Ovary (tissue), 10 donors: ENCODE measurements at regions of chr3 and their contacts with region 1.

Region 1: DNA sequence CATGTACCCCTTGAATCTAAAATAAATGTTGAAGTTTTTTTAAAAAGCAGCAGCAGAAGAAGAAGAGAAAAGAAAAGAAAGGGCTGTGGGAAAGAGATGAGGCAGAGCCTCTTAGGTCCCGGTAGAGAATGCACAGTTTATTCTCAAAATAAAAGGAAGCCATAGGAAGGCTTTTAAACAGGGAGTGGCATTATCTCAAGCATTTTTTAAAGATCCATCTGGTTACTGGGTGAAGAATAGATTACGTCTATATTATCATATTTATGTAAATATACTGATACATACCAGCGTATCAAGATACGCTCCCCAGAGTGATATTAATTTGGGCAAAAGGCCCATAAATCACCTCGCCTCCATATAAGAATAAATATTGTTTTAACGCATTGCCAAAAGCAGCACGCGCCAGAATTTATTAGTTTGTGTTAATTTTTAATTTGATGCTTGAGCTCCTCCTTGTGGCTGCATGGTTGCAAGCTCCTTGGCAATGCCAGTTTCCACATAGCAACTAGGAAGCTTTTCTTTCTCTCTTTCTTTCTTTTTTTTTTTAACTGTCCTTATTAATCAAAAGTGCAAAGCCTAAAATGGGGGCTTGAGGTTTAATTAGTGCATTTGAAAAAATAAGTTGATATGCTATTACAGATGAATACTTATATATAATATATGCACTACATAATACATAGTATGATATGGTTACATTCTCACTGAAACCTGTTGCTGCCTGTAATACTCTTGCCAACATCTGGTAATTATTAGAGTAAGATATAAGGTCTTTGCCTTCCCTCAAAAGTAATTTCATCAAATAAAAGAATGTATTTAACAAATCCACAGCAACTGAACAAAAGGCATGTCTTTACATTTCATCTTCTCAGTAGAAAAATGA is 242.8 kb upstream of the UBE2E2 start:
- DNase-seq: peak; percentile 43 to 69 (median 61)
- H3K4me3 ChIP-seq: no peak overlapping the region
- H3K27ac ChIP-seq: no peak overlapping the region
- H3K4me1 ChIP-seq: no peaks in the 10 kb centered on the region
- H3K27me3 ChIP-seq: no peaks in the 10 kb centered on the region
- CTCF ChIP-seq: peak in 2 of 3 donors; percentile 61 to 62
- EP300 ChIP-seq: no peak
- POLR2A ChIP-seq: no peak

Region 2: DNA sequence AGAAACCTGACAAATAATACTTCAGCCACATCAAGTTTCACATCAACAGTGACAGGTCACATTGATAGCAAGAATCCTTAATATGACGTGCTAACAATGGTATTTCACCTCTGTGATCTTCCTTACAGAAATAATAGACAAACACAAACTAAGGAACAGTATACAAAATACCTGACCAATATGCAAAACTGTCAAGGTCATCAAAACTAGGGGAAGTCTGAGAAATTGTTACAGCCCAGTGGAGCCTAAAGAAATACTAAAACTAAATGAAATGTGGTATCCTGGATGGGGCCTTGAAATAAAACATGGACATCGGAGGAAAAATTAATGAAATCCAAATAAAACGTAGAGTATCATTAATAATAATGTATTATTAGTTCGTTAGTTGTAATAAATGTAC is 787.4 kb before region 1 on chr3:
- intact Hi-C with region 1: loop called in 1 of 4 experiments (anchors 5 kb)
- DNase-seq: no peak
- H3K4me3 ChIP-seq: no peak overlapping the region
- H3K27ac ChIP-seq: no peak overlapping the region
- H3K4me1 ChIP-seq: no peaks in the 10 kb centered on the region
- H3K27me3 ChIP-seq: no peaks in the 10 kb centered on the region
- CTCF ChIP-seq: no peak
- EP300 ChIP-seq: no peak
- POLR2A ChIP-seq: no peak

Region 3: DNA sequence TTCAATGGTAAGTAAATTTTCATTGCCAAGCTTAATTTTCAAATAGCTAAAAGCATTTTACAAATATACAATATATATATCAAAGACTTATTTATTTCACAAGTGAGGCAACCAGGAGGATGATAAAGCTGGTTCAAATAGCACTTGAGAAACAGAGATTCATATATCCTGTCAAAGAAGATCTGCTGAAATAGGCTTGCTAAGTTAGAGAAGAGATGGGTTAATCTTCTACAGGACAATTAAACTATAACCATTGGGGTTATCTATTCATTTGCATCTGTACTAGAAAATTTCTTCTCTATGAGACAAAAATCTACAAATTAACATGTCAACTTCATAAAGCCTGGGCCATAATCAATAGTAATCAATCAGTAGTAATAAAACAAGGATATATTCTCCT is 395.0 kb before region 1 on chr3:
- intact Hi-C with region 1: loop called in 1 of 4 experiments (anchors 10 kb)
- DNase-seq: no peak
- H3K4me3 ChIP-seq: no peak overlapping the region
- H3K27ac ChIP-seq: no peak overlapping the region
- H3K4me1 ChIP-seq: no peaks in the 10 kb centered on the region
- H3K27me3 ChIP-seq: no peaks in the 10 kb centered on the region
- CTCF ChIP-seq: no peak
- EP300 ChIP-seq: no peak
- POLR2A ChIP-seq: no peak

Region 4: DNA sequence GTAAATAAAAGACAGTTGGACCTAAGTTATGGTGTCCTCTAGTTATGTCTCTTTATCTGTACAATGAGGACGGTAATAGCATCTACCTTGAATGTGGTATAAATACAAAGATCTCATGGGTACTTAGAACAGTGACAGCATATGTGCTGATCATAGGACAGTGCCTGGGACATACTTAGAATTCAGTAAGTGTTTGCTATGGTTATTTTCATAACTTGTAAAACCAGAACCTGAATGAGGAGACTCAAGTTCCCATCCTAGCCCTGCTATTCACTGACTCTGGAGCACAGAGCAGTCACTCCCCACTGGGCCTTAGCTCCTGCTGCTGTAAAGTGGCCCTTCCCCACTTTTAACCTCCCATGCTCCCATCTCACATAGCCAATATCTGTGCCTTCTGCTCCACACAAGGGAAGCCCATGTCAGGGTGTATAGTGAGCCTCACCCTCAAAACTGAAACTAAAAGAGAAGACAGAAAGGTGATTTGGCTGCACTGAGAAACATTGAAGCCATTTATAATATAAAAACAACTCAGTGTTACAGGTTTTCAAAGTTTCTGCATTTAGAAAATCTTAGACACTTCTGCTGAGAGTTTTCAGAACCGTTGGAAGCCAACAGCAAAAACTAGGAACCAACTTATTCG is 17.4 kb after region 1 on chr3:
- intact Hi-C with region 1: no loop called
- DNase-seq: no peak
- H3K4me3 ChIP-seq: no peak overlapping the region
- H3K27ac ChIP-seq: no peak overlapping the region
- H3K4me1 ChIP-seq: peaks cover 3% of the 10 kb centered on the region
- H3K27me3 ChIP-seq: no peaks in the 10 kb centered on the region
- CTCF ChIP-seq: no peak
- EP300 ChIP-seq: no peak
- POLR2A ChIP-seq: no peak